ENCODE measurements at regions of chr12 and their contacts with region 1.

Region 1: GRCh38 chr12:122356192-122356635 is 66.3 kb downstream of the CLIP1 start:
- DNase-seq: peak; percentile 66
- ATAC-seq: peak; percentile 56
- H3K4me3 ChIP-seq: no peak overlapping the region
- H3K4me3 Mint-ChIP-seq: no peak overlapping the region
- H3K27ac ChIP-seq: no peak overlapping the region
- H3K27ac Mint-ChIP-seq: no peak overlapping the region
- H3K4me1 ChIP-seq: no peaks in the 10 kb centered on the region
- H3K4me1 Mint-ChIP-seq: peaks cover 3% of the 10 kb centered on the region
- H3K27me3 ChIP-seq: no peaks in the 10 kb centered on the region
- H3K27me3 Mint-ChIP-seq: no peaks in the 10 kb centered on the region
- CTCF ChIP-seq: peak; percentile 91

Region 2: GRCh38 chr12:122336015-122336946 is 19.9 kb before region 1 on chr12:
- CTCF ChIA-PET with region 1: interaction called, 25 read pairs
- POLR2A ChIA-PET with region 1: no interaction called
- intact Hi-C with region 1: no loop called
- DNase-seq: peak; percentile 50
- ATAC-seq: no peak
- H3K4me3 ChIP-seq: no peak overlapping the region
- H3K4me3 Mint-ChIP-seq: no peak overlapping the region
- H3K27ac ChIP-seq: peak overlapping the region in 1 of 2 donors; percentile 19
- H3K27ac Mint-ChIP-seq: no peak overlapping the region
- H3K4me1 ChIP-seq: no peaks in the 10 kb centered on the region
- H3K4me1 Mint-ChIP-seq: no peaks in the 10 kb centered on the region
- H3K27me3 ChIP-seq: no peaks in the 10 kb centered on the region
- H3K27me3 Mint-ChIP-seq: no peaks in the 10 kb centered on the region
- CTCF ChIP-seq: peak; percentile 78